Natural killer cell (primary cell): ENCODE measurements at regions of chr14 and their contacts with region 1.

Region 1: GRCh38 chr14:89416002-89416995 is 734 bp downstream of the FOXN3 start:
- DNase-seq: peak; percentile 97 to 100
- ATAC-seq: peak; percentile 67 to 83 (median 74)
- H3K4me3 ChIP-seq: peak overlapping the region; percentile 97
- H3K4me3 Mint-ChIP-seq: peak overlapping the region; percentile 98
- H3K27ac ChIP-seq: peak overlapping the region; percentile 86
- H3K27ac Mint-ChIP-seq: peak overlapping the region; percentile 93 to 98
- H3K4me1 ChIP-seq: peaks cover 35% of the 10 kb centered on the region
- H3K4me1 Mint-ChIP-seq: peaks cover 61 to 63% of the 10 kb centered on the region in 2 donors
- H3K27me3 ChIP-seq: no peaks in the 10 kb centered on the region
- H3K27me3 Mint-ChIP-seq: no peaks in the 10 kb centered on the region
- CTCF ChIP-seq: no peak

Region 2: DNA sequence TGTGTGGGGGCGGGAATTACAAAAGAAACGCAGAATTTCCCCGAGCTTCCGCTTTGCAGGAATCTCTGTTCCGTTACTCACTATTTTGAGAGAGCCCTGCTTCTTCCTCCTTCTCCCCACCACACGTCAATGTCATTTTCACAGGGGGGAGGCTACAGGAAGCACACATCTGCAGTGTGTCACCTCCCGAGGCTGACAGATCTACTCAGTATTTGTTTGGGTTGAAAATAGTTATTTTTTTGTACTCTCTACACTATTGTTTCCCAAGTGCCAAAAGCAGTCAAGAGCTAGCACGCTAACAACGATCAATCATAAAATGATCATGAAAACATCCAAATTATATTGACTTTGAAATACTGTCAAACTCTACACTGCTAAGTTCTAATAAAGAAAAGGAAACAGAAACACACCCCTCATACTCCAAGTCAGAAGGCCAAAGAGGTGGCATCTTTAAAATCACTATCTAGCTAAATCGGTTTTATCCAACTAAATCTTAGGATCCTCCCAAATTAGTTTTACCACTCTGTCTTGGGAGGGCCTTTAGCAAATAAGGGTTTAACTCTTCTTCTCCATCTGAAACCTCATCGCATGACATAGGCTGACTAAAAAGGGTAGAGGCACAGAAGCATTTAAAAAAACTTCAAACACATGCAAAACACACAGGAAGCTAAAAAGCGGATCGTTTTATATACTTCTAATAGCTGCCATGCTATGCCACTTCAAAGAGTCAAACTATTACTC is 51.1 kb before region 1 on chr14:
- intact Hi-C with region 1: loop called (anchors 2 kb)
- DNase-seq: peak; percentile 38 to 83
- ATAC-seq: peak; percentile 92 to 96 (median 96)
- H3K4me3 ChIP-seq: peak overlapping the region; percentile 13
- H3K4me3 Mint-ChIP-seq: peak overlapping the region; percentile 88
- H3K27ac ChIP-seq: peak overlapping the region; percentile 86
- H3K27ac Mint-ChIP-seq: peak overlapping the region; percentile 88 to 90
- H3K4me1 ChIP-seq: peaks cover 34% of the 10 kb centered on the region
- H3K4me1 Mint-ChIP-seq: peaks cover 49 to 59% of the 10 kb centered on the region in 2 donors
- H3K27me3 ChIP-seq: no peaks in the 10 kb centered on the region
- H3K27me3 Mint-ChIP-seq: no peaks in the 10 kb centered on the region
- CTCF ChIP-seq: no peak

Region 3: DNA sequence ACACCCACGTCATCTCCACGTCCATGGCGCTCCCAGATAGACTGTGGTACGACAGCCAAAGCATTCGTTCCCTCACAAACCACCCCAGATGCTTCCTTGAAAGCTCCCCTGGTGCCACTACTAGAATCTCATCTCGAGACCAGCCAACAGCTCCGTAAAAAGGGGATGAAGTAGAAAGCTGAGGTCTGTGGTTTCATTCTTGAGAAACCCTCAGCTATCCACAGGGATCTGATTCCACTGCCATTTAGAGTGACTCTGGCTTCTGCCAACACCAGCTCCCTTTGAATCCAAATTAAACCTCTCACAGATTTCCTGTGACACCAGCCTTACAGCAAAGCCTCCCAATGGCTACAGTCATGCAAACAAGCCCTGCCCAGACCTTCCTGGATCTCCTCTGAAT is 19.2 kb after region 1 on chr14:
- intact Hi-C with region 1: no loop called
- DNase-seq: no peak
- ATAC-seq: no peak
- H3K4me3 ChIP-seq: no peak overlapping the region
- H3K4me3 Mint-ChIP-seq: peak overlapping the region; percentile 35
- H3K27ac ChIP-seq: peak overlapping the region; percentile 54
- H3K27ac Mint-ChIP-seq: peak overlapping the region; percentile 90 to 91
- H3K4me1 ChIP-seq: peaks cover 53% of the 10 kb centered on the region
- H3K4me1 Mint-ChIP-seq: peaks cover 52 to 68% of the 10 kb centered on the region in 2 donors
- H3K27me3 ChIP-seq: no peaks in the 10 kb centered on the region
- H3K27me3 Mint-ChIP-seq: no peaks in the 10 kb centered on the region
- CTCF ChIP-seq: no peak

Region 4: DNA sequence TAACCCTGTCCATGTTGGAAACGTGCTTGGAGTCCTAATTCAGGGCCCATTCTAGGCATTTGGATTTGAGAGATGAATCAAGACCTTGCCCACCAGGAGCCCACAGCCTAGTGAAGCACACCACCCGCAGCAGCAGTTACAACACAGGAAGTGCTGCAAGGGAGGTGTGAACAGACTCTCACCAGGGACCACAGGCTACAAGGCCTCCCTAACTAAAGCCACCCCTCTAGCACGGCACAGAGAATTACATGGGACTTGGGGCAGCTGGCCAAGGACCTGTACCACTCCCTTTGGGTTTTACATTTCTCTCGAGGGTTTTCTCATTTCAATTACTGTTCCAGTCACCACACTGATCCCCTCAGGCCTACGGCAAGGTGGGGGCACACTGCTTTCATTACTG is 50.2 kb after region 1 on chr14:
- intact Hi-C with region 1: loop called (anchors 2 kb)
- DNase-seq: peak; percentile 68 to 76
- ATAC-seq: peak; percentile 96 to 100 (median 99)
- H3K4me3 ChIP-seq: no peak overlapping the region
- H3K4me3 Mint-ChIP-seq: peak overlapping the region; percentile 87
- H3K27ac ChIP-seq: peak overlapping the region; percentile 71
- H3K27ac Mint-ChIP-seq: peak overlapping the region; percentile 85 to 95
- H3K4me1 ChIP-seq: peaks cover 44% of the 10 kb centered on the region
- H3K4me1 Mint-ChIP-seq: peaks cover 67 to 81% of the 10 kb centered on the region in 2 donors
- H3K27me3 ChIP-seq: no peaks in the 10 kb centered on the region
- H3K27me3 Mint-ChIP-seq: no peaks in the 10 kb centered on the region
- CTCF ChIP-seq: no peak

Region 5: GRCh38 chr14:89618811-89619551 is 202.7 kb after region 1 on chr14:
- intact Hi-C with region 1: loop called (anchors 1 kb)
- DNase-seq: peak; percentile 70 to 84
- ATAC-seq: peak; percentile 38 to 71 (median 68)
- H3K4me3 ChIP-seq: peak overlapping the region; percentile 85
- H3K4me3 Mint-ChIP-seq: peak overlapping the region; percentile 97
- H3K27ac ChIP-seq: peak overlapping the region; percentile 96
- H3K27ac Mint-ChIP-seq: peak overlapping the region; percentile 90 to 98
- H3K4me1 ChIP-seq: peaks cover 24% of the 10 kb centered on the region
- H3K4me1 Mint-ChIP-seq: peaks cover 55 to 60% of the 10 kb centered on the region in 2 donors
- H3K27me3 ChIP-seq: no peaks in the 10 kb centered on the region
- H3K27me3 Mint-ChIP-seq: no peaks in the 10 kb centered on the region
- CTCF ChIP-seq: no peak

Region 6: GRCh38 chr14:89720741-89721315 is 304.5 kb after region 1 on chr14:
- intact Hi-C with region 1: loop called (anchors 2 kb)
- DNase-seq: peak; percentile 66 to 93
- ATAC-seq: peak; percentile 74 to 93 (median 88)
- H3K4me3 ChIP-seq: no peak overlapping the region
- H3K4me3 Mint-ChIP-seq: peak overlapping the region; percentile 72
- H3K27ac ChIP-seq: peak overlapping the region; percentile 93
- H3K27ac Mint-ChIP-seq: peak overlapping the region; percentile 88 to 92
- H3K4me1 ChIP-seq: peaks cover 81% of the 10 kb centered on the region
- H3K4me1 Mint-ChIP-seq: peaks cover 75 to 83% of the 10 kb centered on the region in 2 donors
- H3K27me3 ChIP-seq: no peaks in the 10 kb centered on the region
- H3K27me3 Mint-ChIP-seq: no peaks in the 10 kb centered on the region
- CTCF ChIP-seq: no peak

Region 7: GRCh38 chr14:89954070-89955028 is 538.0 kb after region 1 on chr14 and contains the start of gene EFCAB11:
- intact Hi-C with region 1: loop called (anchors 2 kb)
- DNase-seq: peak; percentile 93 to 98
- ATAC-seq: peak; percentile 77 to 92 (median 78)
- H3K4me3 ChIP-seq: peak within 1 kb of the TSS; percentile 59
- H3K4me3 Mint-ChIP-seq: peak within 1 kb of the TSS; percentile 99
- H3K27ac ChIP-seq: peak within 1 kb of the TSS; percentile 98
- H3K27ac Mint-ChIP-seq: peak within 1 kb of the TSS; percentile 97
- H3K4me1 ChIP-seq: peaks cover 24% of the 10 kb centered on the region
- H3K4me1 Mint-ChIP-seq: peaks cover 40 to 46% of the 10 kb centered on the region in 2 donors
- H3K27me3 ChIP-seq: no peaks in the 10 kb centered on the region
- H3K27me3 Mint-ChIP-seq: no peaks in the 10 kb centered on the region
- CTCF ChIP-seq: no peak
- total RNA-seq, gene EFCAB11: 3.9 to 5.2 (median 4.0) TPM